Activated naive CD4-positive, alpha-beta T cell treated with anti-CD3 and anti-CD28 coated beads for 36 hours (primary cell): ENCODE measurements at regions of chr3 and their contacts with region 1.

Region 1: DNA sequence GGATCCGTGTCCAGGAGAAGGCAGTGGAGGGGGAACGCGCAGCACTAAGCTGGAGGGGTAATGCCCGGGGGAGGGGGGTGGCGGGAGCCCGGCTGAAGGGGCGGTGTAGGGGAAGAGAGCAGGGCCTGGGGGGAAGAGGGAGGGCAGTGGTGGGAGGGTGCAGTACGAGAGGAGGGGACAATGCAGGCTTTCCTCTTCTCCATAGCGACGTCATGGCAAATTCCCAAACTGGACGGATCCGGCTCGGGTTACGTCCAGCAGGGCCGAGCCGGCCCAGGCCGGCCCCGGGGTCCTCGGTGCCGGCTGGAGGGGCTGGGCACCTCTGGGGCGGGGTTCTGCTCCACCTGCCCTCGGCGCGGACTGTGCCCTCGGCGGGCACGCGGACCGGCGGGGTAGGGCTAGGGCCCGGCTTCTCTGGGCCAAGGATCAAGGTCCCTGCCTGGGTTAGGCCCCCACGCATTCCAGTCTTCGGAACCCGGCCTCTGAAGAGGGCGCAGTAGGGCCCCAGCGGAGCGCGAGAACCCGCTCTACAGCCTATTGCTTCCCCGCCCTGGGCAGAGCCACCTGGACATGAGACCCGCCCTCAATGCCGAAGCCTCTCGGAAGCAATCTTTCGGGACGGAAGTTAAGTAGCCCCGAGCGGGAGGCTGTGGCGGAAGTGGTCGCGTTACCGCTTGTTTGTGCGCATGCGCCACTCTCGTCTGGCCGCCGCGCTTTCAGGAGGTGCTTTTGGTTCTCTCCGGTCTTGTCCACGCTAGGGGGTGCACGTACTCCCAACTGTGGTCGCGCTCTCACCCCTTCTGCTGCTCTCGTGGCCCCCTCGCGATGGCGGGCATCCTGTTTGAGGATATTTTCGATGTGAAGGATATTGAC is 1.4 kb downstream of the POLR2H start:
- DNase-seq: peak; percentile 97
- H3K4me3 Mint-ChIP-seq: peak overlapping the region; percentile 97
- H3K27ac Mint-ChIP-seq: peak overlapping the region; percentile 94
- H3K4me1 Mint-ChIP-seq: peaks cover 30% of the 10 kb centered on the region
- H3K27me3 Mint-ChIP-seq: no peaks in the 10 kb centered on the region

Region 2: GRCh38 chr3:184135149-184135910 is 227.6 kb before region 1 on chr3 and contains the start of gene EIF2B5:
- CTCF ChIA-PET with region 1: no interaction called
- intact Hi-C with region 1: loop called (anchors 1 kb)
- DNase-seq: peak; percentile 94
- H3K4me3 Mint-ChIP-seq: peak within 1 kb of the TSS; percentile 97
- H3K27ac Mint-ChIP-seq: peak within 1 kb of the TSS; percentile 97
- H3K4me1 Mint-ChIP-seq: peaks cover 29% of the 10 kb centered on the region
- H3K27me3 Mint-ChIP-seq: no peaks in the 10 kb centered on the region
- total RNA-seq, gene EIF2B5: 48.8 to 56.4 TPM

Region 3: DNA sequence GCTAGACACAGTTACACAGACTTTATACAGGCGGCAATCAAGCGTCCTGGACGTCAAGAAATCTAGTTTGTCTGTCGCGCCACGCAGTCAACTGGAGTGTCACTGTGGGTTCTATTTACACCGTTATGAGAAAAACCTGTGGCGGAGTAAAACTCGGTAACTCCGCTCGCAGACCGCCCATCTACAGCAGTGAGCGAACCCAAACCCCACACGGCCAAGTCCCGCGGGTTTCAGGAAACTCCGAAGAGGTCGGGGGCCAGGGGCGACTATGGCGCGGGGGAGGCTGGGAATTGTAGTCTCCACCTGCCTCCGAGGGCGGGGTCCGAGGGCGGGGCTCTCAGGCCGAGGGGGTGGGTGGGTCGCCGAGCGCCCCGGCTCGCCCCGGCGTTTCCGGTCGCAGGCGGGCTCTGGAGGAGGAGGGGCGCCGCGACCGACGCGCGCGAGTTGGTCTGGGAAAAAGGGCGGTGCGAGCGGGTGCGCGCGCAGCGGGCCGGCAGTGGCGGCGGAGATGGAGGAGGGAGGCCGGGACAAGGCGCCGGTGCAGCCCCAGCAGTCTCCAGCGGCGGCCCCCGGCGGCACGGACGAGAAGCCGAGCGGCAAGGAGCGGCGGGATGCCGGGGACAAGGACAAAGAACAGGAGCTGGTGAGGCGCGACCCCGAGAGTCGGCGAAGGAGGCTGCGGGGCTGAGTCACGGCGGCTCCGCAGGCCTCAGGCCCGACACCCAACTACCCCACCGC is 64.0 kb before region 1 on chr3 and contains the start of gene PSMD2:
- CTCF ChIA-PET with region 1: interaction called, 3 read pairs
- intact Hi-C with region 1: loop called (anchors 1 kb)
- DNase-seq: peak; percentile 99
- H3K4me3 Mint-ChIP-seq: peak within 1 kb of the TSS; percentile 98
- H3K27ac Mint-ChIP-seq: peak within 1 kb of the TSS; percentile 87
- H3K4me1 Mint-ChIP-seq: peaks cover 21% of the 10 kb centered on the region
- H3K27me3 Mint-ChIP-seq: no peaks in the 10 kb centered on the region
- total RNA-seq, gene PSMD2: 244 to 257 TPM

Region 4: DNA sequence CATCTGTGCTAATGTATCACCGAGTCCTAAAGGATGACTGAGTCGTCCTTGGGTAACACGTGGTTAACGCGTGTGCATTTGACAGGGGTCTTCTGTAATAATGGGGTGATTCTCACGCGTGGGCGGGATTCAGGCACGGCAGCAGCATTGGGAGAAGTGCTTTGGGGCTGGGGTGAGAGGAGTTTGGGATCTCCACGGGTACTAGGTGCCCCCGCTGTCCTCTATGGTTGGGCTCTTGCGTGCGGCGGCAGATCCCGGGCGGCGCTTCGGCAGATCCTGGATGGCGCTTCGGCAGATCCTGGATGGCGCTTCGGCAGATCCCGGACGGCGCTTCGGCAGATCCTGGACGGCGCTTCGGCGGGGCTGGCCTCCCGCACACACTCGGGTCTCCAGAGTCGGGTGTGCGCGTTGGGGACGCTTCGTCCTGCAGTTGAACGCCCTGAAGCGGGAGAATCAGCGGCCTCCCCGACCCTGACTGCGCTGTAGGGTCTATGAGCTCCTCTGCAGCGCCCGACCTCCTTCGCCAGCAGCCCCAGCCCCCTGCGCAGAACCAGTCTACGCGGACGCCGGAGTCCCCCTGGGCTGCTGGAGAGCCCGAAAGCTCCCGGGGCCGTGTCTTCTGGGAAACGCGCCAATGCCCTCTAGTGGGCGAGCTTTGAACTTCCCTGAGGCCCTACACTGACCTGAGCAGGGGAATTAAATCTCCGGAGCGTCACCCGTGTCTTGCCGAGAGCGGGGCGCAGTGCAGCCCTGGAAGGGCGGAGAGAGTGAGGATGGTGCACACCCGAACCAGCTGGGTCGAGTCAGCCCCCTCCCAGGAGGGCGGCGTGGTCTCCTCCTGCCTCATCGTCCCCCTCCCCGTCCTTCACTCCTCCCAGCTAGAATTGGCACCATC is 150.6 kb after region 1 on chr3:
- CTCF ChIA-PET with region 1: interaction called, 85 read pairs
- intact Hi-C with region 1: loop called (anchors 1 kb)
- DNase-seq: peak; percentile 89
- H3K4me3 Mint-ChIP-seq: peak overlapping the region; percentile 63
- H3K27ac Mint-ChIP-seq: no peak overlapping the region
- H3K4me1 Mint-ChIP-seq: peaks cover 8% of the 10 kb centered on the region
- H3K27me3 Mint-ChIP-seq: peaks cover 41% of the 10 kb centered on the region

Region 5: GRCh38 chr3:184711493-184712247 is 348.8 kb after region 1 on chr3 and contains the start of gene MAGEF1:
- CTCF ChIA-PET with region 1: no interaction called
- intact Hi-C with region 1: loop called (anchors 5 kb)
- DNase-seq: peak; percentile 81
- H3K4me3 Mint-ChIP-seq: peak within 1 kb of the TSS; percentile 95
- H3K27ac Mint-ChIP-seq: peak within 1 kb of the TSS; percentile 90
- H3K4me1 Mint-ChIP-seq: peaks cover 36% of the 10 kb centered on the region
- H3K27me3 Mint-ChIP-seq: no peaks in the 10 kb centered on the region
- total RNA-seq, gene MAGEF1: 17.4 to 18.1 TPM